Natural killer cell (primary cell): ENCODE measurements at regions of chr20 and their contacts with region 1.

Region 1: GRCh38 chr20:17504898-17505635 is 26.1 kb downstream of the BFSP1 start:
- DNase-seq: peak; percentile 63 to 82
- ATAC-seq: peak; percentile 64 to 83 (median 78)
- H3K4me3 ChIP-seq: peak overlapping the region; percentile 43
- H3K4me3 Mint-ChIP-seq: peak overlapping the region; percentile 90
- H3K27ac ChIP-seq: peak overlapping the region; percentile 74
- H3K27ac Mint-ChIP-seq: peak overlapping the region; percentile 85 to 93
- H3K4me1 ChIP-seq: peaks cover 48% of the 10 kb centered on the region
- H3K4me1 Mint-ChIP-seq: peaks cover 55 to 56% of the 10 kb centered on the region in 2 donors
- H3K27me3 ChIP-seq: no peaks in the 10 kb centered on the region
- H3K27me3 Mint-ChIP-seq: no peaks in the 10 kb centered on the region
- CTCF ChIP-seq: peak; percentile 80

Region 2: GRCh38 chr20:17569616-17570346 is 64.7 kb after region 1 on chr20 and contains the start of gene DSTN:
- intact Hi-C with region 1: loop called (anchors 2 kb)
- DNase-seq: peak; percentile 86 to 94
- ATAC-seq: peak; percentile 88 to 94 (median 90)
- H3K4me3 ChIP-seq: peak within 1 kb of the TSS; percentile 84
- H3K4me3 Mint-ChIP-seq: peak within 1 kb of the TSS; percentile 99
- H3K27ac ChIP-seq: peak within 1 kb of the TSS; percentile 78
- H3K27ac Mint-ChIP-seq: peak within 1 kb of the TSS; percentile 92 to 97
- H3K4me1 ChIP-seq: peaks cover 11% of the 10 kb centered on the region
- H3K4me1 Mint-ChIP-seq: peaks cover 35% of the 10 kb centered on the region in 2 donors
- H3K27me3 ChIP-seq: peaks cover 9% of the 10 kb centered on the region
- H3K27me3 Mint-ChIP-seq: peaks cover 0 to 5% of the 10 kb centered on the region in 2 donors
- CTCF ChIP-seq: no peak
- total RNA-seq, gene DSTN: 47.5 to 73.5 (median 70.0) TPM

Region 3: GRCh38 chr20:17617551-17618223 is 112.6 kb after region 1 on chr20:
- intact Hi-C with region 1: loop called (anchors 1 kb)
- DNase-seq: peak; percentile 48 to 72
- ATAC-seq: peak; percentile 30 to 44 (median 30)
- H3K4me3 ChIP-seq: no peak overlapping the region
- H3K4me3 Mint-ChIP-seq: no peak overlapping the region
- H3K27ac ChIP-seq: no peak overlapping the region
- H3K27ac Mint-ChIP-seq: no peak overlapping the region
- H3K4me1 ChIP-seq: peaks cover 36% of the 10 kb centered on the region
- H3K4me1 Mint-ChIP-seq: peaks cover 14 to 20% of the 10 kb centered on the region in 2 donors
- H3K27me3 ChIP-seq: no peaks in the 10 kb centered on the region
- H3K27me3 Mint-ChIP-seq: no peaks in the 10 kb centered on the region
- CTCF ChIP-seq: peak; percentile 67

Region 4: DNA sequence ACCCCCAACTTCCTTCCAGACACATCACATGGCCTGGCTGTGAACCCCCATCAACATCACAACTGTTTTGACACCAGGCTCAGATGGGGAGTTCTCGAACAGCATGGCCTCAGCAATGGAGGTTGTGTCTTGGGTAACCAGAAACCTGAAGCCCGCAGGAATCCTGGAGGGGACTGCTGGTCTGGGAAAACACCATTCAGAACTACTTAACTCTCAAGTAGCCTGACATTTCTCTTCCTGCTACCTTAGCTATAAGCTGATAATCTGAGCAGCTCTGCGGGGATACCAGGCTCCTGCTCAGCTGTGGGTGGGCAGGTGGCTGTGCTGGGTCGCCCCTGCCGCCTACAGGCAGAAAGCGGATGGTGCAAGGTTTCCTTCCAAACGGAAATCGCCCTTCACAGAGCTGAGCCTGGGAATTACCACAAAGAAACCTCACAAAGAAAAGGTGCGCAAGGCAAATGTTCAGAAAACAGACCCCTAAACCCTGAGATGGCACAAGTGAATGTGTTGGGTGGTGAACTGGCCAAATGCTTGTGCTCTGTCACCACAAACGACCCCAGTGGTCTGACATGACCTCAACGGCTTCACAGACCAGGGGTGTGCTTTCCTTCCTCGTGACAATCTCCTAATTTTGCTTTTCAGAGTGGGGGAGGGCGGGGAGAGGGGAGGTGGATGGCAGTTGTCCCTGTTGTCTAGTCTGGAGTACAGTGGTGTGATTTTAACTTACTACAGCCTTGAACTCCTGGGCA is 434.0 kb after region 1 on chr20:
- intact Hi-C with region 1: loop called (anchors 1 kb)
- DNase-seq: peak; percentile 55 to 79
- ATAC-seq: peak; percentile 88 to 95 (median 94)
- H3K4me3 ChIP-seq: no peak overlapping the region
- H3K4me3 Mint-ChIP-seq: peak overlapping the region; percentile 50
- H3K27ac ChIP-seq: peak overlapping the region; percentile 6
- H3K27ac Mint-ChIP-seq: peak overlapping the region in 1 of 2 donors; percentile 76
- H3K4me1 ChIP-seq: peaks cover 17% of the 10 kb centered on the region
- H3K4me1 Mint-ChIP-seq: peaks cover 5 to 11% of the 10 kb centered on the region in 2 donors
- H3K27me3 ChIP-seq: no peaks in the 10 kb centered on the region
- H3K27me3 Mint-ChIP-seq: no peaks in the 10 kb centered on the region
- CTCF ChIP-seq: peak; percentile 76

Region 5: GRCh38 chr20:17995967-17996819 is 491.1 kb after region 1 on chr20:
- intact Hi-C with region 1: loop called (anchors 1 kb)
- DNase-seq: peak in 1 of 2 donors; percentile 80
- ATAC-seq: peak; percentile 87 to 99 (median 95)
- H3K4me3 ChIP-seq: no peak overlapping the region
- H3K4me3 Mint-ChIP-seq: no peak overlapping the region
- H3K27ac ChIP-seq: no peak overlapping the region
- H3K27ac Mint-ChIP-seq: peak overlapping the region in 1 of 2 donors; percentile 37
- H3K4me1 ChIP-seq: peaks cover 3% of the 10 kb centered on the region
- H3K4me1 Mint-ChIP-seq: peaks cover 6 to 7% of the 10 kb centered on the region in 2 donors
- H3K27me3 ChIP-seq: no peaks in the 10 kb centered on the region
- H3K27me3 Mint-ChIP-seq: peaks cover 0 to 10% of the 10 kb centered on the region in 2 donors
- CTCF ChIP-seq: peak; percentile 92